ENCODE measurements at regions of chr19 and their contacts with region 1.

Region 1: GRCh38 chr19:11078893-11079292 is 10.4 kb upstream of the LDLR start:
- DNase-seq: no peak
- H3K4me3 ChIP-seq: no peak overlapping the region
- H3K27ac ChIP-seq: no peak overlapping the region
- H3K4me1 ChIP-seq: peaks cover 0 to 4% of the 10 kb centered on the region in 2 donors
- H3K27me3 ChIP-seq: no peaks in the 10 kb centered on the region
- CTCF ChIP-seq: no peak

Region 2: DNA sequence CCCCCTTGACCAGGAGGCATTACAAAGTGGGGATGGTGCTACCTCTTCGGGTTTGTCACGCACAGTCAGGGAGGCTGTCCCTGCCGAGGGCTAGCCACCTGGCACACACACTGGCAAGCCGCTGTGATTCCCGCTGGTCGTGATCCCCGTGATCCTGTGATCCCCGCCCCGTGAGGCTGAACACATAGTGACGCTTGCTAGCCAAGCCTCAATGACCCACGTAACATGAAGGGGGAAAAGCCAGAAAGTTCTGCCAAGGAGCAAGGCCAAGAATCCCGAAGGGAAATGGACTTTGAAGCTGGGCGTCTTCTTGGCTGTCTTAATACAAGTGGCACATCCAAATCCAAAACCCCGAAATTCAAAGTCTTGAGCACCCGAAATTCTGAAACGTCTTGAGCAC is 24.1 kb after region 1 on chr19:
- intact Hi-C with region 1: loop called (anchors 2 kb)
- DNase-seq: no peak
- H3K4me3 ChIP-seq: no peak overlapping the region
- H3K27ac ChIP-seq: no peak overlapping the region
- H3K4me1 ChIP-seq: no peaks in the 10 kb centered on the region
- H3K27me3 ChIP-seq: no peaks in the 10 kb centered on the region
- CTCF ChIP-seq: no peak